OCI-LY7 (cell line): ENCODE measurements at regions of chr9 and their contacts with region 1.

Region 1: GRCh38 chr9:68584189-68585033 is 43.7 kb upstream of the TMEM252 start:
- DNase-seq: peak; percentile 94
- H3K4me3 ChIP-seq: no peak overlapping the region
- H3K27ac ChIP-seq: no peak overlapping the region
- H3K4me1 ChIP-seq: peaks cover 53% of the 10 kb centered on the region
- CTCF ChIP-seq: peak; percentile 100

Region 2: DNA sequence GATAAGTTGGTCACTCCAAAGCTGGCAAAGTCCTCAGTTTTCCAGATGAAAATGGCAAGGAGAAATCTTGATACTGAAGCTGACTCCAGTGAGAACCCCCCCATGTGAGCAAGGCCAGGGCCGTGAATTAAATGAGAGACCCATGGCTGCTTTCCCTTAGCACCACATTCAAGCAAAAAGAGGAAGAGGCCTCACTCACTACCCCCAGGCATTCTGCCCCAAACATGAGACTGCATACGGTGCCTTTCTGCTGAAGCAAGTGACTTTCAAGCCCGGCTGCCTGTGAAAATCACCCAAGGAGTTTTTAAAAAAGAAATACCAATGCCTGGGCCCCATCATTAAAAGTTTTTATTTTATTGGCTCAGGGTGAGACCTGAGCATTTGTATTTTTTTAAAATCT is 110.6 kb before region 1 on chr9:
- CTCF ChIA-PET with region 1: no interaction called
- POLR2A ChIA-PET with region 1: no interaction called
- intact Hi-C with region 1: no loop called
- DNase-seq: no peak
- H3K4me3 ChIP-seq: no peak overlapping the region
- H3K27ac ChIP-seq: no peak overlapping the region
- H3K4me1 ChIP-seq: no peaks in the 10 kb centered on the region
- CTCF ChIP-seq: no peak

Region 3: DNA sequence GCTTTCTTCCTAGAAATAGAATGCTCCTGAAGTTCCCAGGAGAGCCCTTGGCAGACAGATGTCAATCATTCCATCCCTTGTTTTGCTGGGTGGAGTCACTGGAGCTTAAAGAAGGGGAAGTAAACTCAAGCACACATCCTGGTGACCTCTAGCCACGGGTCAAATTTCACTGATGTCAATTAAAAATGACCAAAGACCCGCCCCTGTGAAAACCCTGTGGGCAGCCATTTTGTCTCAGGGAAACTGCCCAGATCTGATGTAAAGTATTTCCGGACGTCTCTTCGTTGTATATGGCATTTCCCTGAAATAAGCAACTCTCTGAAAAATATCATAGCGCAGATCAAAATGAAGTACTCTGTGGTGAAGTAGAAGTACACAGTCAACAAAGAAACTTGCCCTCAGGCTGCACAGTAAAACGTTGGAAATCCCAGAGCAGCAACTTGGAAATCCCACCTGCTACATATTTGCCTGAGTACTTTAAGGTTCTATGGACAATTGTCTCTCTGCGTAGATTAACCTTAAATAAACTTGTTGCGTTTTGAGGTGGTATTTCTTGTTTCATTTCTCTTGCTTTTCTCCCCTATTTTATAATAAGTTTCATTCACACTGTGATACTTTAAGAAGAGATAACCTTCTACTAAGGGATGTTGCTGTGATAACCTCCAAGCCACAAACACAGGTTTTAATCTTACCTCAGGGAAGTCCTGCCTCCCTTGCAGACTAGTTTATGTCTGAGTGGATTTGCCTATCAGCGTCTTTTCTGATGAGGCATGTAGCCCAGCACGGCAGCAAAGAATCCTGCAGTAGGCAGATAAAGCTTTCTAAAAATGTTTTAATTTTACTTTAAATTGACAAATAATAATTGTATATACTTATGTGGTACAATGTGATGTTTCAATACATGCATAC is 59.7 kb after region 1 on chr9:
- CTCF ChIA-PET with region 1: interaction called, 3 read pairs
- POLR2A ChIA-PET with region 1: interaction called, 7 read pairs
- intact Hi-C with region 1: loop called (anchors 1 kb)
- DNase-seq: peak; percentile 94
- H3K4me3 ChIP-seq: peak overlapping the region; percentile 58
- H3K27ac ChIP-seq: peak overlapping the region; percentile 99
- H3K4me1 ChIP-seq: peaks cover 80% of the 10 kb centered on the region
- CTCF ChIP-seq: no peak

Region 4: GRCh38 chr9:68685770-68686169 is 101.4 kb after region 1 on chr9:
- CTCF ChIA-PET with region 1: interaction called, 4 read pairs
- POLR2A ChIA-PET with region 1: interaction called, 4 read pairs
- intact Hi-C with region 1: loop called (anchors 1 kb)
- DNase-seq: peak; percentile 85
- H3K4me3 ChIP-seq: no peak overlapping the region
- H3K27ac ChIP-seq: no peak overlapping the region
- H3K4me1 ChIP-seq: peaks cover 39% of the 10 kb centered on the region
- CTCF ChIP-seq: peak; percentile 91

Region 5: GRCh38 chr9:68779558-68780384 is 195.4 kb after region 1 on chr9:
- CTCF ChIA-PET with region 1: no interaction called
- POLR2A ChIA-PET with region 1: interaction called, 3 read pairs
- intact Hi-C with region 1: loop called (anchors 1 kb)
- DNase-seq: peak; percentile 96
- H3K4me3 ChIP-seq: peak overlapping the region; percentile 85
- H3K27ac ChIP-seq: peak overlapping the region; percentile 70
- H3K4me1 ChIP-seq: peaks cover 41% of the 10 kb centered on the region
- CTCF ChIP-seq: peak; percentile 78

Region 6: GRCh38 chr9:68949271-68950000 is 365.0 kb after region 1 on chr9:
- CTCF ChIA-PET with region 1: interaction called, 5 read pairs
- POLR2A ChIA-PET with region 1: interaction called, 3 read pairs
- intact Hi-C with region 1: loop called (anchors 1 kb)
- DNase-seq: peak; percentile 76
- H3K4me3 ChIP-seq: no peak overlapping the region
- H3K27ac ChIP-seq: peak overlapping the region; percentile 39
- H3K4me1 ChIP-seq: peaks cover 63% of the 10 kb centered on the region
- CTCF ChIP-seq: peak; percentile 78

Region 7: DNA sequence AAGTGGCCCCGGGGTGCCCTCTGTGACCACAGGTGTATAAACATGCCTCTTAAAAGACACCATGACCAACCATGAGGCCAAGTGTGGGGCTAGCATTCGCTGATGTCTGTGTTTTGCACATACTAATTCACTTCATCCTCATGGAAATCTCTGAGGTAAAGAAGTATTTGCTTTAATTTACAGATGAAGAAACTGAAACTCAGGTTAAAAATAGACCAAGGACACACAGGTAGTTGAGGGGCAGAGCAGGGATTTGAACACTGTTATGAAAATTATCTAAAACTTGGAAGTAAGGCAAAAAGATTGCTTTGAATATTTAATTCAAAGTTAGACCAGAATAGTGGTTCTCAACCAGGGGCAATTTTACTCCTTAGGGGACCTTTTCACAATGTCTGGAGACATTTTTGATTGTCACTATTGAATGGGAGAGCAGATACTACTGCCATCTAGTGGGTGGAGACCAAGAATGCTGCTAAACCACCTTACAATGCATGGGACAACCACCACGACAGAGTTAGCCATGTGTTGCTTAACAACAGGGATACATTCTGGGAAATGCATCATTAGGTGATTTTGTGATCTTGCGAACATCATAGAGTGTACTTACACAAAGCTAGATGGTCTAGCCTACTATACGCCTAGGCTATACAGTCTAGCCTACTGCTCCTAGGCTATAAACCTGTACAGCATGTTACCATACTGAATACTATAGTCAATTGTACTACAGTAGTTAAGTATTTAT is 443.1 kb after region 1 on chr9:
- CTCF ChIA-PET with region 1: no interaction called
- POLR2A ChIA-PET with region 1: no interaction called
- intact Hi-C with region 1: loop called (anchors 1 kb)
- DNase-seq: peak; percentile 77
- H3K4me3 ChIP-seq: no peak overlapping the region
- H3K27ac ChIP-seq: no peak overlapping the region
- H3K4me1 ChIP-seq: peaks cover 7% of the 10 kb centered on the region
- CTCF ChIP-seq: peak; percentile 94